Thyroid gland (tissue), 4 donors: ENCODE measurements at regions of chr12 and their contacts with region 1.

Region 1: DNA sequence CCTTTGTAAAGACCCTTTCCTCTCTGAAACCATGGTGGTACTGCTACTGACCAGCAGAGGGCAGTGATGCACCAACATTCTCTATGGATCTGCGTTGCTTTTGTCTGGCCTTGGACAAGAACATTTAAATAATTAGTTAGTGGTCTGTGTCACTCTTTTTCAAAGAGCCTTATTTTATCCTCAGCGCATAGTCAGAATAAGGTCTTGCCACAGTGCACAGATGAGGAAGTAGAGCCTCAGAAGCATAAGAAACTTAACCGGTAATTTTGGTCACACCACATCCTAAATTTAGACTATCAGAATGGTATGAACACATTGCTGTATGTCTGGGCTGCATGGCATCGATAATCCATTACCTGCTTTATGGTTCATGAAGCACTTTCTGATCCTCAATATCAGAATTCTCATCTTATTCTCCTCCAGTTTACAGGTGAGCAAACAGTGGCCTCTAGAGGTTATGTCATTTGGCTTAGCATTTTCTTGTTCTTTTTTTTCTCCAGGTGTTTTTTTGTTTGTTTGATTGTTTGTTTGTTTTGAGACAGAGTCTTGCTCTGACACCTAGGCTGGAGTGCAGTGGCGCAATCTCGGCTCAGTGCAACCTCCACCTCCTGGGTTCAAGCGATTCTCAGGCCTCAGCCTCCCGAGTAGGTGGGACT is 23.7 kb upstream of the IFT81 start:
- DNase-seq: peak; percentile 64 to 68
- H3K4me3 ChIP-seq: no peak overlapping the region
- H3K27ac ChIP-seq: no peak overlapping the region
- H3K4me1 ChIP-seq: peaks cover 0 to 6% of the 10 kb centered on the region in 2 donors
- H3K27me3 ChIP-seq: no peaks in the 10 kb centered on the region
- CTCF ChIP-seq: peak; percentile 67 to 96 (median 88)
- POLR2A ChIP-seq: no peak

Region 2: DNA sequence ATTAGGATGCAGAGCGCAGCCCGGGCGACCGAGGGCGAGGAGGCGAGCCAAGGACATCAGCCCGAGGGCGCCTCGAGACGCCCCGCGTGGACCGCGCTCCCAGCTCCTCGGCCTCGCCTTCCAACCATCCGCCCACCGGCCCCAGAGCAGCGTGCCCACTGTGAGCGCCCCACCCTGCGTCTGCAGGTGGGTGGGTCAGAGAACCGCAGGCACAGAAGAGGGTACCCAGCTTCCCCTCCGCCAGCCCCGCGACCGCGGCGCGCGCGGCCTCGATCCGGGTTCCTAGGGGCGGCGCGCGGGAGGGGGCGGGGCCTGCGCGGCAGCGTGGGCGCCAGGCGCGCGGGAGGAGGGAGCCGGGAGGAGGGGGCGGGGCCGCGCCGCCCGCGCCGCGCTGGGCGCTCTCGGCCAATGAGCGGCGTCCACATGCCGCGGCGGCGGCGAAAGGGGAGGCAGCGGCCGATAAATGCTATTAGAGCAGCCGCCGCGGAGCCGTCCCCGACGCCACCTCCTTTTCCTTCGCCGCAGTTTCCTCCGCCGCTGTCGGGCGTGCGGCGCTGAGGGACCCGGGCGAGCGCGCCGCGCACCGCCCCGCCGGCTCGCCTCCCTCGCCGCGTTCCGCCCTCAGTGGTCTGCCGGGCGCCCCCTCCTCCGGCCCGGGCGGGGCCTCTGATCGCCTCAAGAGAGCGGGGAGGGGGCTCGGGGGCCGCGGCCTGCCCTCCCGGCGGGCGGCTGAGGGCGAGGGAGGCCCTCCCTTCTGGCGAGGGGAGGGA is 180.5 kb after region 1 on chr12 and contains the start of gene ATP2A2:
- intact Hi-C with region 1: loop called (anchors 5 kb)
- DNase-seq: peak; percentile 88 to 90
- H3K4me3 ChIP-seq: peak within 1 kb of the TSS; percentile 82 to 95 (median 89)
- H3K27ac ChIP-seq: peak within 1 kb of the TSS; percentile 93 to 99 (median 95)
- H3K4me1 ChIP-seq: peaks cover 28 to 45% of the 10 kb centered on the region in 2 donors
- H3K27me3 ChIP-seq: no peaks in the 10 kb centered on the region
- CTCF ChIP-seq: no peak
- POLR2A ChIP-seq: peak; percentile 78 to 98
- total RNA-seq, gene ATP2A2: 126 to 220 (median 174) TPM

Region 3: DNA sequence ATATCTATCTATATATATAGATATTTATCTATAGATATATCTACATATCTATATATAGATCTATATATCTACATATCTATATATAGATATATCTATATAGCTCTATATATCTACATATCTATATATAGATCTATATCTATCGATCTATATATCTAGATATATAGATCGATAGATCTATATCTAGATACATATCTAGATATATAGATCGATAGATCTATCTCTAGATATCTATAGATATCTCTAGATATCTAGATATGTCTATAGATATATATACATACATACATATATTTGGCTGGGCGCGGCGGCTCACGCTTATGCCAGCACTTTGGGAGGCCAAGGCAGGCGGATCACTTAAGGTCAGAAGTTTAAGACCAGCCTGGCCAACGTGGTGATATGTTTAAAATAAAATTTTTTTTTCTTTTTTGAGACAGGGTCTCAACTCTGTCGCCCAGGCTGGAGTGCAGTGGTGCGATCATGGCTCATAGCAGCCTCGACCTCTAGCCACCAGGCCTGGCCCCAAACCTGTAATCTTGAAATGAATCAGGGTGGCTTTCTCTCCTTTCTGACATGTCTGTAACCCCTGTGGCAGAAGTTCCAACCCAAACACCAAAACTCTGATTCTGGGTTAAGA is 331.6 kb after region 1 on chr12:
- intact Hi-C with region 1: loop called (anchors 5 kb)
- DNase-seq: no peak
- H3K4me3 ChIP-seq: peak overlapping the region in 1 of 3 donors; percentile 32
- H3K27ac ChIP-seq: no peak overlapping the region
- H3K4me1 ChIP-seq: no peaks in the 10 kb centered on the region
- H3K27me3 ChIP-seq: no peaks in the 10 kb centered on the region
- CTCF ChIP-seq: no peak
- POLR2A ChIP-seq: no peak